Ascending aorta (tissue), 2 donors: ENCODE measurements at regions of chr21 and their contacts with region 1.

Region 1: DNA sequence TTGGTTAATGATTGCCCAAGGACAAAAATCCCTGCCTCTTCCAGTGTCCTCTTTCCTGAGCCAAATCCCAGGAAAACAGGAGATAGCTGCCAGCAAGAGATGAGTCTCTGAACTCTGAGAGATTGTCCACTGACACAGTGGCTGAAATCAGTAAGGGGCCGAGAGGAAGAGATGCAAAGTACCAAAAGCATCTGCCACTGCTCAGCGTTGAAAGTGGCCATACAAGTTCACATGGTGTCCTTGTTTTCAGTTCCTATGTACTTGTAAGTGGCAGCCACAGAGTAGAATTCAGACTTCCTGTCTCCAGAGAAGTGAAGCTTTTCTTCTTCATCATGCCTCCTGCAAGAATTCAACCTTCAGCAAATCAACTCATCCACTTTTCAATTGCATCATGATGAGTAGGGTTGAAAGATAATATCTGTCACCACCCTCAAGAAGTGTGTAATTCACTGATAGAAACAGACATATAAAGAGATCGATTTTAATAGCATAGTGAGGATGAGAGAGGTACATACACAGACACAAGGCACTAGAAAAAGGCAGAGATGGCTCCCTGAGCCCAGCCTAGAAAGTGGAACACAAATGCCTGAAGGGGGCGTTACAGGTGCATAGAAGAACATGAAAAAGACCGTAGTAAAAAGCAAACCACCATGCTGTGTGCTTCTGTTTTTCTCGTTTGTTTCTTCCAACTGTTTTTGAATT is 185.8 kb downstream of the MRPL39 start:
- DNase-seq: no peak
- H3K4me3 ChIP-seq: no peak overlapping the region
- H3K27ac ChIP-seq: no peak overlapping the region
- H3K4me1 ChIP-seq: no peaks in the 10 kb centered on the region
- H3K27me3 ChIP-seq: no peaks in the 10 kb centered on the region
- CTCF ChIP-seq: peak; percentile 5 to 46 (median 12)

Region 2: GRCh38 chr21:25561668-25562641 is 140.5 kb after region 1 on chr21:
- intact Hi-C with region 1: loop called (anchors 10 kb)
- DNase-seq: peak; percentile 36 to 83
- H3K4me3 ChIP-seq: peak overlapping the region; percentile 65 to 86
- H3K27ac ChIP-seq: peak overlapping the region; percentile 83 to 91
- H3K4me1 ChIP-seq: peaks cover 0 to 3% of the 10 kb centered on the region in 2 donors
- H3K27me3 ChIP-seq: no peaks in the 10 kb centered on the region
- CTCF ChIP-seq: peak in 2 of 3 experiments; percentile 20 to 35

Region 3: GRCh38 chr21:25708467-25709065 is 287.1 kb after region 1 on chr21:
- intact Hi-C with region 1: loop called (anchors 5 kb)
- DNase-seq: peak in 1 of 2 donors; percentile 66
- H3K4me3 ChIP-seq: no peak overlapping the region
- H3K27ac ChIP-seq: no peak overlapping the region
- H3K4me1 ChIP-seq: no peaks in the 10 kb centered on the region
- H3K27me3 ChIP-seq: no peaks in the 10 kb centered on the region
- CTCF ChIP-seq: peak; percentile 55 to 79 (median 76)